ENCODE measurements at regions of chr3 and their contacts with region 1.

Region 1: DNA sequence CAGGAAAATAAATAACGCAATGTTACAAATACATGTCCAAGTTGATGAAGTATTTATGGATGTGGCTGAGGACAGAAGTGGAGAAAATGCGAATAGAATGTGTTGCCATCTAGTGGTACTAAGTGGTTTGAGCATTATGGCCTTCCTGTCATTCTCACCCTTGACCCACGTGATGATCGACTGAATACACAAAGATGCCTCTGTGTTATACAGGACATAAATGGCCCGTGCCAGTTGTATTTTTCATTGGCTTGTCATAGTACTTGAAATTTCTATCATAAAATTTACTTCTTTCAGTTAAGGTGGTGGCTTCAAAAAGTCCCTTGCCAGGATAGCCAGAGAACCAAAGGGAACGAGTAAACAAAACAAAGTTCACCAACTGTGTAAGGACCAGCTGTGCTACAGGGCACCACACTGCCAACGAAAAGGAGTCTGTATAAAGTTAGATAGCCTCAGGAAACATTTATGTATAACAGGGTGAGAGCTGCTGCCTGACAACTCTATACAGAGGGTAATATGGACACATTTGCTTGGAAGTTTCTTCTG is 103.7 kb downstream of the MYH15 start:
- DNase-seq: peak; percentile 78
- ATAC-seq: peak; percentile 75
- H3K4me3 ChIP-seq: peak overlapping the region in 1 of 5 experiments; percentile 3
- H3K4me3 Mint-ChIP-seq: peak overlapping the region; percentile 54
- H3K27ac ChIP-seq: peak overlapping the region; percentile 16 to 49
- H3K27ac Mint-ChIP-seq: peak overlapping the region; percentile 82
- H3K4me1 ChIP-seq: peaks cover 26 to 27% of the 10 kb centered on the region in 2 donors
- H3K4me1 Mint-ChIP-seq: peaks cover 31% of the 10 kb centered on the region
- H3K27me3 ChIP-seq: no peaks in the 10 kb centered on the region
- H3K27me3 Mint-ChIP-seq: no peaks in the 10 kb centered on the region
- CTCF ChIP-seq: peak; percentile 79

Region 2: GRCh38 chr3:107927361-107928083 is 479.2 kb before region 1 on chr3:
- CTCF ChIA-PET with region 1: interaction called, 19 read pairs
- POLR2A ChIA-PET with region 1: no interaction called
- intact Hi-C with region 1: loop called (anchors 1 kb)
- DNase-seq: peak; percentile 77
- ATAC-seq: peak; percentile 93
- H3K4me3 ChIP-seq: peak overlapping the region; percentile 48 to 67 (median 58)
- H3K4me3 Mint-ChIP-seq: peak overlapping the region; percentile 93
- H3K27ac ChIP-seq: no peak overlapping the region
- H3K27ac Mint-ChIP-seq: peak overlapping the region; percentile 54
- H3K4me1 ChIP-seq: peaks cover 12 to 18% of the 10 kb centered on the region in 2 donors
- H3K4me1 Mint-ChIP-seq: peaks cover 15% of the 10 kb centered on the region
- H3K27me3 ChIP-seq: peaks cover 0 to 30% (median 8%) of the 10 kb centered on the region in 4 experiments
- H3K27me3 Mint-ChIP-seq: peaks cover 9% of the 10 kb centered on the region
- CTCF ChIP-seq: peak; percentile 86

Region 3: GRCh38 chr3:108062051-108062450 is 344.7 kb before region 1 on chr3:
- CTCF ChIA-PET with region 1: interaction called, 3 read pairs
- POLR2A ChIA-PET with region 1: no interaction called
- intact Hi-C with region 1: loop called (anchors 5 kb)
- DNase-seq: peak; percentile 64
- ATAC-seq: peak; percentile 86
- H3K4me3 ChIP-seq: no peak overlapping the region
- H3K4me3 Mint-ChIP-seq: peak overlapping the region; percentile 42
- H3K27ac ChIP-seq: peak overlapping the region in 1 of 2 donors; percentile 63
- H3K27ac Mint-ChIP-seq: peak overlapping the region; percentile 1
- H3K4me1 ChIP-seq: peaks cover 13 to 30% of the 10 kb centered on the region in 2 donors
- H3K4me1 Mint-ChIP-seq: peaks cover 64% of the 10 kb centered on the region
- H3K27me3 ChIP-seq: no peaks in the 10 kb centered on the region
- H3K27me3 Mint-ChIP-seq: no peaks in the 10 kb centered on the region
- CTCF ChIP-seq: no peak

Region 4: GRCh38 chr3:108124337-108125152 is 282.2 kb before region 1 on chr3:
- CTCF ChIA-PET with region 1: interaction called, 4 read pairs
- POLR2A ChIA-PET with region 1: no interaction called
- intact Hi-C with region 1: loop called (anchors 1 kb)
- DNase-seq: peak; percentile 94
- ATAC-seq: peak; percentile 64
- H3K4me3 ChIP-seq: peak overlapping the region; percentile 61 to 94 (median 83)
- H3K4me3 Mint-ChIP-seq: peak overlapping the region; percentile 92
- H3K27ac ChIP-seq: peak overlapping the region; percentile 97 to 99
- H3K27ac Mint-ChIP-seq: peak overlapping the region; percentile 95
- H3K4me1 ChIP-seq: peaks cover 78 to 82% of the 10 kb centered on the region in 2 donors
- H3K4me1 Mint-ChIP-seq: peaks cover 77% of the 10 kb centered on the region
- H3K27me3 ChIP-seq: no peaks in the 10 kb centered on the region
- H3K27me3 Mint-ChIP-seq: no peaks in the 10 kb centered on the region
- CTCF ChIP-seq: no peak

Measured in B cell (primary cell).